Naive thymus-derived CD4-positive, alpha-beta T cell (primary cell): ENCODE measurements at regions of chr22 and their contacts with region 1.

Region 1: DNA sequence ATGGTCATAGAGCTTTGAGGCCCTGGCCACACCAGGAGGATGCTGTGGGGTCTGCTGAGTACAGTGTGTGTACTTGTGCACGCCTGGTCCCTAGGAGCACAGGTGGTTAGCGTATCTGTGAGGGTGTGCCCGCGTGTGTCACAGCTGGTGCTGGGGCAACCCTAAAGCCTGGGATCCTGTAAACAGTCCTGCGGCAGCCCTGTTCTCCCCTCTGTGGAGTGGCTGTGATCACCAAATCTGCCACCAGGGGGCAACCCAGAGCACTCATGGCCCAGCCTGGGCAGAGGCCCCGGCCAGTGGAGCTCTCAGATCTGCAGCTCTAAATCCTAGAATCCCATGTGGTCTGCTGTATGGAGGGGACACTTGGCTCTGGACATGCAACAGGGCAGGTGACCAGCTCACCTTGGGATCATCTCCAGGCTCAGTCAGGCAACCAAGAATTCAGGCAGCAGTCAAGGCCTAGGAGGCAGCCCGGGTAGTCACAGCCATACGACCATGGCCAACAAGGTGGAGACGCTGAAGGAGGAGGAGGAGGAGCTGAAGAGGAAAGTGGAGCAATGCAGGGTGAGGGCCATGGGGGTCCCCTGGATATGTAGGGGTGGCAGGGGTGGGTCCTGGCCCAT is 3.9 kb downstream of the SH3BP1 start:
- DNase-seq: peak; percentile 65 to 90 (median 81)
- ATAC-seq: peak; percentile 83
- H3K4me3 ChIP-seq: peak overlapping the region; percentile 45
- H3K4me3 Mint-ChIP-seq: peak overlapping the region; percentile 29 to 75 (median 55)
- H3K27ac ChIP-seq: peak overlapping the region; percentile 24
- H3K27ac Mint-ChIP-seq: peak overlapping the region; percentile 51 to 89 (median 74)
- H3K4me1 ChIP-seq: peaks cover 34 to 39% of the 10 kb centered on the region in 2 donors
- H3K4me1 Mint-ChIP-seq: peaks cover 12 to 47% (median 30%) of the 10 kb centered on the region in 7 donors
- H3K27me3 ChIP-seq: no peaks in the 10 kb centered on the region
- H3K27me3 Mint-ChIP-seq: no peaks in the 10 kb centered on the region

Region 2: GRCh38 chr22:37063431-37064420 is 579.6 kb before region 1 on chr22:
- CTCF ChIA-PET with region 1: no interaction called
- POLR2A ChIA-PET with region 1: no interaction called
- intact Hi-C with region 1: no loop called
- DNase-seq: peak in 4 of 9 donors; percentile 27 to 41 (median 31)
- ATAC-seq: no peak
- H3K4me3 ChIP-seq: no peak overlapping the region
- H3K4me3 Mint-ChIP-seq: no peak overlapping the region
- H3K27ac ChIP-seq: no peak overlapping the region
- H3K27ac Mint-ChIP-seq: peak overlapping the region in 1 of 9 donors; percentile 70
- H3K4me1 ChIP-seq: no peaks in the 10 kb centered on the region
- H3K4me1 Mint-ChIP-seq: peaks cover 0 to 18% (median 9%) of the 10 kb centered on the region in 7 donors
- H3K27me3 ChIP-seq: no peaks in the 10 kb centered on the region
- H3K27me3 Mint-ChIP-seq: peaks cover 0 to 10% (median 0%) of the 10 kb centered on the region in 5 donors

Region 3: GRCh38 chr22:37098976-37099591 is 544.3 kb before region 1 on chr22:
- CTCF ChIA-PET with region 1: no interaction called
- POLR2A ChIA-PET with region 1: no interaction called
- intact Hi-C with region 1: no loop called
- DNase-seq: no peak
- ATAC-seq: peak; percentile 48
- H3K4me3 ChIP-seq: no peak overlapping the region
- H3K4me3 Mint-ChIP-seq: no peak overlapping the region
- H3K27ac ChIP-seq: no peak overlapping the region
- H3K27ac Mint-ChIP-seq: peak overlapping the region in 5 of 9 donors; percentile 2 to 68 (median 41)
- H3K4me1 ChIP-seq: no peaks in the 10 kb centered on the region
- H3K4me1 Mint-ChIP-seq: peaks cover 0 to 38% (median 10%) of the 10 kb centered on the region in 7 donors
- H3K27me3 ChIP-seq: no peaks in the 10 kb centered on the region
- H3K27me3 Mint-ChIP-seq: peaks cover 0 to 27% (median 12%) of the 10 kb centered on the region in 5 donors

Region 4: DNA sequence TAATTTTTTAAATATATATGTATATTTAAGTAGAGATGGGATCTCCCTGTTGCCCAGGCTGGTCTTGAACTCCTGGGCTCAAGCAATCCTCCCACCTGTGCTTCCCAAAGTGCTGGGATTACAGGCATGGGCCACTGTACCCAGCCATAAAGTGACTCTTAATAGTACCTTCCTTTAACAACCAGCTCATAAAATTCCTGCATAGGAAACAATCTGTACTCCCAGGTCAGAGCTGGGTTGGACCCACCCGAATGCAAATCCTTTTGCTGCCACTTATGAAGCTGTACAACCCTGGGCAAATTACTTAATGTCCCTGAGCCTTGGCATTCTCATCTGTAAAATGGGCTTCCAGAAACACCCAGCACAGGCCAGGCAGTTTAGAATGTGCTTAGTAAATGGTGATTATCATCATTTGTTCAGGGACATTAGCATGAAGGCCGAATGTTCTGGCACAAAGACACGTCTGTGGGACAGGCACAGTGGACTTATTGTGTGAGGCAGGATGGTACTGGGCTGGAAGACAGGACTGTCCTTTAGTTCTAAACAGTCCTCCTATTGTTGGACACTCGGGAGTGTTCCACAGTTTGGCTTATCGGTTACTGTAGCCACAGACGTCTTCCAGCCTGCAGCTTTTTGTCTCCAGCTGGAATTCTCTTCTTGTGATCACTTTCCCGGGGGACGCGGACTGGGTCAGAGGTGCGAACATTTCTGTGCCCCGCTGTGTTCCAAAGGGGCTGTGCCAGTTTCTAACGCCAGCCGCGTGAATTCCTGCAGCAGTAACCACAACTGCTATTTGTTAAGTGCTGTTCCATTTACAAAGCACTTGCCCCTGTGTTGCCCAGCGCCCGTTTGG is 21.1 kb after region 1 on chr22:
- CTCF ChIA-PET with region 1: interaction called, 36 read pairs
- POLR2A ChIA-PET with region 1: interaction called, 75 read pairs
- intact Hi-C with region 1: no loop called
- DNase-seq: no peak
- ATAC-seq: no peak
- H3K4me3 ChIP-seq: no peak overlapping the region
- H3K4me3 Mint-ChIP-seq: no peak overlapping the region
- H3K27ac ChIP-seq: no peak overlapping the region
- H3K27ac Mint-ChIP-seq: no peak overlapping the region
- H3K4me1 ChIP-seq: peaks cover 12 to 16% of the 10 kb centered on the region in 2 donors
- H3K4me1 Mint-ChIP-seq: peaks cover 20 to 35% (median 31%) of the 10 kb centered on the region in 7 donors
- H3K27me3 ChIP-seq: no peaks in the 10 kb centered on the region
- H3K27me3 Mint-ChIP-seq: no peaks in the 10 kb centered on the region

Region 5: GRCh38 chr22:37686002-37686982 is 43.0 kb after region 1 on chr22 and contains the start of gene NOL12:
- CTCF ChIA-PET with region 1: interaction called, 254 read pairs
- POLR2A ChIA-PET with region 1: interaction called, 16 read pairs
- intact Hi-C with region 1: loop called (anchors 1 kb)
- DNase-seq: peak; percentile 63 to 82 (median 78)
- ATAC-seq: peak; percentile 91
- H3K4me3 ChIP-seq: peak within 1 kb of the TSS; percentile 82
- H3K4me3 Mint-ChIP-seq: peak within 1 kb of the TSS; percentile 93 to 98 (median 96)
- H3K27ac ChIP-seq: peak within 1 kb of the TSS; percentile 84
- H3K27ac Mint-ChIP-seq: peak within 1 kb of the TSS; percentile 88 to 99 (median 95)
- H3K4me1 ChIP-seq: peaks cover 18 to 22% of the 10 kb centered on the region in 2 donors
- H3K4me1 Mint-ChIP-seq: peaks cover 16 to 39% (median 33%) of the 10 kb centered on the region in 7 donors
- H3K27me3 ChIP-seq: no peaks in the 10 kb centered on the region
- H3K27me3 Mint-ChIP-seq: no peaks in the 10 kb centered on the region
- total RNA-seq, gene NOL12: 32.8 to 52.5 (median 45.3) TPM

Region 6: GRCh38 chr22:37745548-37746365 is 102.4 kb after region 1 on chr22:
- CTCF ChIA-PET with region 1: interaction called, 3 read pairs
- POLR2A ChIA-PET with region 1: no interaction called
- intact Hi-C with region 1: loop called in 1 of 2 experiments (anchors 5 kb)
- DNase-seq: peak; percentile 67 to 90 (median 78)
- ATAC-seq: peak; percentile 97
- H3K4me3 ChIP-seq: peak overlapping the region; percentile 74
- H3K4me3 Mint-ChIP-seq: peak overlapping the region; percentile 82 to 96 (median 92)
- H3K27ac ChIP-seq: peak overlapping the region; percentile 77
- H3K27ac Mint-ChIP-seq: peak overlapping the region; percentile 75 to 93 (median 87)
- H3K4me1 ChIP-seq: peaks cover 9 to 18% of the 10 kb centered on the region in 2 donors
- H3K4me1 Mint-ChIP-seq: peaks cover 13 to 36% (median 26%) of the 10 kb centered on the region in 7 donors
- H3K27me3 ChIP-seq: no peaks in the 10 kb centered on the region
- H3K27me3 Mint-ChIP-seq: no peaks in the 10 kb centered on the region